HEK293 (cell line): ENCODE measurements at regions of chr17 and their contacts with region 1.

Region 1: GRCh38 chr17:57009737-57010445 is 32.0 kb downstream of the SCPEP1 start:
- H3K4me3 ChIP-seq: no peak overlapping the region
- H3K27ac ChIP-seq: no peak overlapping the region
- H3K4me1 ChIP-seq: no peaks in the 10 kb centered on the region
- CTCF ChIP-seq: peak; percentile 54

Region 2: DNA sequence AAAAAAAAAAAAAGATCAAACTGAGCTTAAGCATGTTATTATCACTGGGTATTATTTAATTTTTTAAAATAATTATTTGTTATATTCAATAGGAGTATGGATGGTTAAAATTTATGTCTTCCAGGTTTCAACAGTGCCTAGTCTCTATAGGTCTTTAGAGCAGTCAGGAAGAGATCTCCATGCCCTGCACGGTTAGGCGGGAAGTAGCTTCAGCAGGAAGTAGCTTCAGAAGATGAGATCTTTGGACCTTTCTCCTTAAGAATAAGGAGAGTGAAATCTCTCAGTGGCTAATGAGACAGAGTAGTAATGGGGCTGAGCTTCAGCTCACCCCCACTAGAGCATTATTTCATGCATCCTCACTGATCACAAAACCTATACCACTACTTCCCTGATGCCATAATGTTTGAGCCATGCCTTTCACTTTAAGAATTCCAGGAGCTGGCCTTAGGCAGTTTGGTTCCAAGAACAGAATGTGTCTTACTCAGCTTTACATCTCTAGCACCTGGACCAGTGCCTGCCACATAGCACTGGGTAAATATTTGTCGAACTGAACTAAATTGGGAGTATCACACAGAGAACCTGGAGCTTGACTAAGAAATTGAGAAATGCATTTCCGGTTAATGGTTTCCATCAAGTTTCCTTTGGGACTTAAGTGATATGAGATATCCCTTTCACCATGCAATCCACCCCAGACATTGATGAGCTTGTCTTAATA is 11.5 kb after region 1 on chr17:
- CTCF ChIA-PET with region 1: interaction called, 26 read pairs
- POLR2A ChIA-PET with region 1: no interaction called
- H3K4me3 ChIP-seq: no peak overlapping the region
- H3K27ac ChIP-seq: no peak overlapping the region
- H3K4me1 ChIP-seq: no peaks in the 10 kb centered on the region
- CTCF ChIP-seq: no peak